Sciatic nerve (tissue), 2 donors: ENCODE measurements at regions of chr22 and their contacts with region 1.

Region 1: DNA sequence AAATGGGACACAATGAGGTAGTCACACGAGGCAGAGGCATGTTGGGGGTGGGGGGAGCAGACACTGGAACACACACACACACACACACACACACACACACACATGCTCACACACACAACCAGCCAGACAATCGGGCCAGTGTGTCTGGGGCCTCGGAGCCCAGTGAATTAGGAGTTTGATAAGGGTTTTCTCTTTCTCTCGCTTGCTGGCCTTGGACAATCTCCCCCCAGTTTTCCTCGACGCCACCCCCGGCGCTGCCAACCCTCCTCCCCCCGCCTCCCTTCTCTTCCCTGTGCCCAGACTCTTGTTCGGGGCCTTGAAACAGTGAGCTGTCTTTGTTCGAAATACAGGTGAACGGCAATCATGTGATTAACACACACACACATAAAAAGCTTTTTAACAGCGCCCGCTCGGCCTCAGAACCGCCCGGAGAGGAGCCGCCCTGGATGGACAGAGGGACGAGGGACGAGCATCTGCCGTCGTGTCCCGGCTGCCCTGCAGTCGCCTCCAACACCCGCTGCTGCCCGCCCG is 1.5 kb upstream of the SOX10 start:
- DNase-seq: no peak
- ATAC-seq: peak; percentile 42

Region 2: DNA sequence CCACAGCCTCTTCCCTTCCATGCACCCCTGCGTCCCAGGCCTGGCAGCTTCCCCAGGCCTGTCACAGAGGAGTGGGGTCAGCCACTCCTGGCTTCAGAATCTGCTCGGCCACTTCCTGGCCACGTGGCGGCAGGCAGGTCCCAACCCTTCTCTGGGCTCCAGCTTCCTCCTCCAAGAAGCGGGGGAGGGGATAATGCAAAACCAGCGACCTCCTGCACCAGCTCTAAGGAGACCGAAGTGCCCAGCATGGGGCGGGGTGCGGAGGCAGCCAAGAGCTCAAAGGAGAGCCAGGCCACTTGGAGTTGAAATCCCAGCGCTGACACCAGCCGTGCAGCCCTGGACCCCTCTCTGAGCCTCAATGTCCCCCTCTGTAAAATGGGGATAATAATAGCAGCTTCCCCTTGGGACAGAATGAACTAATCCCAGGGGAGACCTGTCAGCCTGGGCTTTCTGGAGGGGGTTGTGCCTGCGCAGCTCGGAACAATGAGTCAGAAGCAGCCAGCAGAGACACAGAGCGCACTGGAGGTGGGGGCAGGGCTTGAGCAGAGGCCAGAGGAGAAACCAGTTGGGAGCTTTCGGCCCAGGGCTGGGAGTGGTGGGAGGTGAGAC is 48.6 kb after region 1 on chr22:
- intact Hi-C with region 1: loop called (anchors 5 kb)
- DNase-seq: peak; percentile 84
- ATAC-seq: peak; percentile 81